ENCODE measurements at regions of chr1 and their contacts with region 1.

Region 1: GRCh38 chr1:51729156-51729823 is 112.4 kb downstream of the OSBPL9 start:
- DNase-seq: peak; percentile 95
- ATAC-seq: peak; percentile 97
- H3K4me3 ChIP-seq: peak overlapping the region; percentile 85 to 89 (median 87)
- H3K27ac ChIP-seq: peak overlapping the region; percentile 88
- H3K4me1 ChIP-seq: peaks cover 52% of the 10 kb centered on the region
- H3K27me3 ChIP-seq: no peaks in the 10 kb centered on the region; a peak in 1 of 5 replicates
- CTCF ChIP-seq: no peak
- EP300 ChIP-seq: 0 out of 4 replicates have a peak, but pooled peaks of 1 of the 2 experiments have one; percentile 18
- POLR2A ChIP-seq: peak; percentile 48 to 54; a peak in 3 of 4 replicates
- RAD21 ChIP-seq: peak; percentile 13; the same call in 1 of the 2 replicates

Region 2: GRCh38 chr1:51627678-51628077 is 101.6 kb before region 1 on chr1:
- CTCF ChIA-PET with region 1: no interaction called
- POLR2A ChIA-PET with region 1: no interaction called
- in situ Hi-C with region 1: no loop called
- intact Hi-C with region 1: loop called (anchors 10 kb)
- DNase-seq: peak; percentile 49
- ATAC-seq: peak; percentile 67; the same call in 2 of the 3 replicates
- H3K4me3 ChIP-seq: no peak overlapping the region
- H3K27ac ChIP-seq: no peak overlapping the region
- H3K4me1 ChIP-seq: peaks cover 8% of the 10 kb centered on the region
- H3K27me3 ChIP-seq: no peaks in the 10 kb centered on the region
- CTCF ChIP-seq: peak; percentile 54
- EP300 ChIP-seq: no peak
- POLR2A ChIP-seq: no peak
- RAD21 ChIP-seq: peak; percentile 74

Region 3: DNA sequence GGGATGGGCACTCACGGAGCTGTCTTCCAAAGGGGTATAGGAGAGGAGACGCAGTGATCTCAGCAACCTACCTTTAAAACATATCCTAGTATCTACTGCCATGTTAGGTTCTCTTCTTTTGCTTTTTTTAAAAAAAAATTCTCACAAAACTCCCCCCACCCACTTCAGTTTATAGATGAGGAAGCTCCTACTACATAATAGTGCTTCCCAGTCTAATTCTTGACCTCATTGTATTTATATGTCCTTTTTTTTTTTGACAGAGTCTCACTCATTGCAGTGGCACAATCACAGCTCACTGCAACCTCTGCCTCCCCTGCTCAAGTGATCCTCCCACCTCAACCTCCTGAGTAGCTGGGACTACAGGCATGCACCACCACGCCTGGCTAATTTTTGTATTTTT is 12.5 kb before region 1 on chr1:
- CTCF ChIA-PET with region 1: no interaction called
- POLR2A ChIA-PET with region 1: interaction called, 10 read pairs
- in situ Hi-C with region 1: no loop called
- intact Hi-C with region 1: no loop called
- DNase-seq: no peak
- ATAC-seq: no peak
- H3K4me3 ChIP-seq: no peak overlapping the region
- H3K27ac ChIP-seq: no peak overlapping the region
- H3K4me1 ChIP-seq: no peaks in the 10 kb centered on the region
- H3K27me3 ChIP-seq: no peaks in the 10 kb centered on the region
- CTCF ChIP-seq: no peak
- EP300 ChIP-seq: no peak
- POLR2A ChIP-seq: no peak
- RAD21 ChIP-seq: no peak